Right lobe of liver (tissue), 6 donors: ENCODE measurements at regions of chr17 and their contacts with region 1.

Region 1: GRCh38 chr17:10357768-10358167 is 15.0 kb downstream of the MYH13 start:
- DNase-seq: peak in 1 of 3 donors; percentile 29
- ATAC-seq: peak in 1 of 4 donors; percentile 47
- H3K4me3 ChIP-seq: no peak overlapping the region
- H3K27ac ChIP-seq: no peak overlapping the region
- H3K4me1 ChIP-seq: no peaks in the 10 kb centered on the region
- H3K27me3 ChIP-seq: no peaks in the 10 kb centered on the region
- CTCF ChIP-seq: peak in 3 of 4 donors; percentile 41 to 47 (median 46)
- POLR2A ChIP-seq: no peak

Region 2: DNA sequence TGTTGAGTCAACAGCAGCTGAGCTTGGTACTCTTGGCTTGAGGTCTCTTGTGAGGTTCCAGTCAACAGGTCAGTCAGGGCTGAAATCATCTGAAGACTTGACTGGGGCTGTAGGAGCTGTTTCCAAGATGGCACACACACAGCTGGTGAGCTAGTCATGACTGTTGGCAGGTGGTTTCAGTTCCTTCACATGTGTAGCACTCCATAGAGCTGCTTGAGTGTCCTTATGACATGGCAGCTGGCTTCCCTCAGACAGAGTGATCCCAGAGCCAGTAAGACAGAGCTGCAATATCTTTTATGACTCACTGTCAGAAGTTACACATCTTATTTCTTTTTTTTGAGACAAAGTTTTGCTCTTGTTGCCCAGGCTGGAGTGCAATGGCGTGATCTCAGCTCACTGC is 139.9 kb before region 1 on chr17:
- intact Hi-C with region 1: no loop called
- DNase-seq: no peak
- ATAC-seq: no peak
- H3K4me3 ChIP-seq: no peak overlapping the region
- H3K27ac ChIP-seq: no peak overlapping the region
- H3K4me1 ChIP-seq: no peaks in the 10 kb centered on the region
- H3K27me3 ChIP-seq: no peaks in the 10 kb centered on the region
- CTCF ChIP-seq: no peak
- POLR2A ChIP-seq: no peak

Region 3: DNA sequence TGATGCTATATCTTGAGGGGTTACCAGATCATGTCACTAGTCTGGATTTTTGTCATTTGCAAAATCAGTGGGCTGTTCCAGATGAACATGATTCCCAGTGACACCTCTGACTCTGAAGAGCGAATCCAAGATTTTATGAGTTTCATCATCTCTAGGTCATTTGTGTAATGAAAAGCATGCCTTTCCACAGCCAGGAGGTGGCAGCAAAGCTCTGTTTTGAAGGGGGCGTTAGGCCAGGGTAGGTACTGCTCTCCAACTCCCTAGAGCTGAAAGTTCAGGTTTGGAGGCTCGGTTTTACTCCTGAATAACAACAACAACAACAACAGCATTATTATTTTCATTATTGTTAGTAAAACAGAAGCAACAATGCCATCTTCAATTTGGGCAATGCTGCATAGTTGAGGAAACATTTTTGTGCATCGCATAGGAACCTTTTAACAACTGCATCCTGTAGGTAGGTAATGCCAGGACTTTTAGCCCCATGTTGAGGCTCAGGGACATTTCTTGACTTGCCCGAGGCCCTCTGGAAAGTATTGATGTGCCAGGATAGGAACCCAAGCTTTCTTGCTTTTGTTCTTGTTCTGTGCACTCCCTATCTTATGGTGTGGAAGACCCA is 61.9 kb before region 1 on chr17:
- intact Hi-C with region 1: loop called in 1 of 2 experiments (anchors 10 kb)
- DNase-seq: peak in 1 of 3 donors; percentile 31
- ATAC-seq: peak; percentile 59 to 85 (median 74)
- H3K4me3 ChIP-seq: no peak overlapping the region
- H3K27ac ChIP-seq: no peak overlapping the region
- H3K4me1 ChIP-seq: no peaks in the 10 kb centered on the region
- H3K27me3 ChIP-seq: no peaks in the 10 kb centered on the region
- CTCF ChIP-seq: peak; percentile 43 to 69 (median 60)
- POLR2A ChIP-seq: no peak